ENCODE measurements at regions of chr1 and their contacts with region 1.

Region 1: DNA sequence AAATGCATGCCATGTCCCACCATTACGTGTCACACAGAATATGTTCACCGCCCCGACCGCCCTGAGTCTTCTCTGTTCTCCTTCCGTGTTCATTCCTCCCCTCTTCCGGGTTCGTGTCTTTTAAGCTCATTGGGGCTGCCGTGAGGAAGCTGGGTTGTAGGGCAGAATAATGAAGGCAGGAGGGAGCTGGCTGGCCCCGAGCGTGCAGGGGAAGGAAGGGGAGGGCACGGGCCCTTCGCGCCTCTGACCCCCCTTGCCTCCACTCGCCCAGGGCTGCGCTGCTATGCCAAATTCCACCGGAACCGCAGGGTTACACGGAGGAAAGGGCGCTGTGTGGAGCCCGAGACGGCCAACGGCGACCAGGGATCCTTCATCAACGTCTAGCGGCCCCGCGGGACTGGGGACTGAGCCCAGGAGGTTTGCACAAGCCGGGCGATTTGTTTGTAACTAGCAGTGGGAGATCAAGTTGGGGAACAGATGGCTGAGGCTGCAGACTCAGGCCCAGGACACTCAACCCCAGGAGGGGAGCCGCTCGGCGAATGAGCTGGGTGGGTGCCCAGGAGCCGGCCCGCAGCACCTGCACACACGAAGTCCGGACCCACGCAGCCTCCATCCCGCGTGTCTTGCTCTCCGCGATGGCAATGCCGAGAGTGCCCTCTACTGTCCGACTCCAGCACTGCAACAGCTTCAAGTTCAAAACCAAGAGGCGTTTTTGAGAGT is 16.5 kb upstream of the AGTRAP start:
- DNase-seq: peak; percentile 87
- H3K4me3 Mint-ChIP-seq: peak overlapping the region; percentile 56
- H3K27ac Mint-ChIP-seq: peak overlapping the region; percentile 85
- H3K4me1 Mint-ChIP-seq: peaks cover 19% of the 10 kb centered on the region
- H3K27me3 Mint-ChIP-seq: peaks cover 9% of the 10 kb centered on the region

Region 2: DNA sequence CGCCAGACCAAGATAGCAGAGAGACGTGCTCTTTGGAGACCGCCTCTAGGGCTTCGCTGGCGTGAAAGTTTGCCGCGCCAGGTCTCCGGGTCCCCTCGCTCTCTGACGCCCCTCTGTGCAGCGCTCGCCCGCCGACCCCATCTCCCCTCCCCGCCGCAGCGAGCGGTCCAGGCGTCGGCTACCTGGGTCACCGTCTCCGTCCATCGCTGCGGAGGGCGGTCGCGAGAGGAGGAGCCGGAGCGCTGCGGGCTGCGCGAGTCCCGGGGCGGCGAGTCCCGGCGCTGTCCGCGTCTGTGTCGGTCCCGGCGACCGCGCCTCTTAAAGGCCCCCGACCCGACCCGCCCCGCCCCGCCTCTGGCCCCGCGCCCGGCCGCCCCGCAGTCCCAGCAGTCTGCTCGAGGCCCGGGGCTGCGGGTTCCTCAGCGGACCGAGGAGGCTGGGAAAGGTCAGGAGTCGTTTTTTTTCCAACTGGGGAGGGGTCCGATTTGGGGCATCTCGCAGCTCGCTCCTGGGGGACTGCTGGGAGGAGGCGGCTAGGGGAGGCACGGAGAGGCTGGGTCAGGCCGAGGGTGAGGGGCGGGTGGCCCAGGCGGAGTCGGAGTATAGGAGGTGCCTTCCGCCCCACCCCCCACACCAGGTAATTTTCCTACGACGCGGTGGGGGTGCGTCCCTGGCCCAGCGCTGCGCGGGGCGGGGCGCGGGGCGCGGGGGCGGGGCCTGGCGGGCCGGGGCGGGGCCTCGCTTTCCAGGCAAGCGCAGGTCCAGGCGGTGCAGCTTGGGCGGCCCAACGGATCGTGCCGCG is 65.1 kb before region 1 on chr1 and contains the starts of genes FBXO2 and FBXO44:
- CTCF ChIA-PET with region 1: interaction called, 96 read pairs
- POLR2A ChIA-PET with region 1: interaction called, 28 read pairs
- DNase-seq: peak; percentile 60
- H3K4me3 Mint-ChIP-seq: peak within 1 kb of the TSS; percentile 71
- H3K27ac Mint-ChIP-seq: no peak within 1 kb of the TSS
- H3K4me1 Mint-ChIP-seq: peaks cover 29% of the 10 kb centered on the region
- H3K27me3 Mint-ChIP-seq: peaks cover 6% of the 10 kb centered on the region
- total RNA-seq, gene FBXO2: 1.4 to 1.8 TPM
- total RNA-seq, gene FBXO44: 30.4 to 32.4 TPM

Region 3: DNA sequence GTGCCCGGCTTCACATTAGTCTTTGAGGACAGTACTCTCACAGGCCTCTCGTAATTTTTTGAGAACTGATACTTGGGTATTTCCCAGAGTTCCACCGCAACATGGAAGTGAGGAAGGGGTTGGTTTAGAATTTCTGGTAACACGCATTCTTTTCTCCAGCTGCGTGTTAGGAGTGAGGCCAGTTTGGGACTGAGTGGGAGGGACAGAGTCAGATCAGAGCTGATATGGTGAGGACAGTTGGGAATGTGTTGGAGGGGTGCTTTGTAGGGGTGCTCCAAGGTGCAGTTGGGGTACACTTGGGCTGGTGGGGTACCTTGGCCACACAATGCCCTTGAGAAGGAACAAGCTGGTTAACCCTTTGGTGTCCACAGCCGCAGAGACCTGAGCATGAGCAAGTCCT is 48.7 kb before region 1 on chr1:
- CTCF ChIA-PET with region 1: interaction called, 65 read pairs
- POLR2A ChIA-PET with region 1: interaction called, 47 read pairs
- DNase-seq: no peak
- H3K4me3 Mint-ChIP-seq: no peak overlapping the region
- H3K27ac Mint-ChIP-seq: no peak overlapping the region
- H3K4me1 Mint-ChIP-seq: peaks cover 18% of the 10 kb centered on the region
- H3K27me3 Mint-ChIP-seq: no peaks in the 10 kb centered on the region

Region 4: DNA sequence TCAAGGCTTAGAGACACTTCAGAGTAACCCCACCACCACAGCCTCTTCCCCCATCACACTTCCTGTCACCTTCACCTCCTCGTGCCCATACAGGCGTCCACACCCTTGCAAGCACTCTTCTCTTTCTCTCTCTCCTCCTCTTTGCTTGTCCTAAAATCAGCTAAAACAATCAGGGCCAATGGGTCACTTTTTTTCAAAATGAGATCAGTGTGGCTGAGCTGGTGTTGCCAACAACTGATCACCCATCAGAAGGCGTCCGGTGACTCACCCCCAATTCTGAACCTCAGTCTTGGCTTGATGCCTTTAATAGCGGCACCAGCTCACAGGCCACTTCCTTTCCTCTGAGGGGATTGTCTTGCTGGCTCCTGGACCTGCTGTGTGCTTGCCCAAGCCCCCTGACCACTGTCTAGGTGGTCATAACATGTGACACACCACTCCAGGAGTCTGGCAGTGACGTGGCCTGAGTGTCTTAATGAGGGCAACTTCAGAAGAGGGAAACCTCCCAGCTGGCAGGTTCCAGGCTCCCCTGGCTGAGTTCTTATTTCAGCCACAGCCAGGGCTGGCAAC is 26.4 kb before region 1 on chr1:
- CTCF ChIA-PET with region 1: interaction called, 11 read pairs
- POLR2A ChIA-PET with region 1: interaction called, 4 read pairs
- DNase-seq: peak; percentile 72
- H3K4me3 Mint-ChIP-seq: peak overlapping the region; percentile 28
- H3K27ac Mint-ChIP-seq: peak overlapping the region; percentile 23
- H3K4me1 Mint-ChIP-seq: peaks cover 31% of the 10 kb centered on the region
- H3K27me3 Mint-ChIP-seq: peaks cover 49% of the 10 kb centered on the region

Region 5: DNA sequence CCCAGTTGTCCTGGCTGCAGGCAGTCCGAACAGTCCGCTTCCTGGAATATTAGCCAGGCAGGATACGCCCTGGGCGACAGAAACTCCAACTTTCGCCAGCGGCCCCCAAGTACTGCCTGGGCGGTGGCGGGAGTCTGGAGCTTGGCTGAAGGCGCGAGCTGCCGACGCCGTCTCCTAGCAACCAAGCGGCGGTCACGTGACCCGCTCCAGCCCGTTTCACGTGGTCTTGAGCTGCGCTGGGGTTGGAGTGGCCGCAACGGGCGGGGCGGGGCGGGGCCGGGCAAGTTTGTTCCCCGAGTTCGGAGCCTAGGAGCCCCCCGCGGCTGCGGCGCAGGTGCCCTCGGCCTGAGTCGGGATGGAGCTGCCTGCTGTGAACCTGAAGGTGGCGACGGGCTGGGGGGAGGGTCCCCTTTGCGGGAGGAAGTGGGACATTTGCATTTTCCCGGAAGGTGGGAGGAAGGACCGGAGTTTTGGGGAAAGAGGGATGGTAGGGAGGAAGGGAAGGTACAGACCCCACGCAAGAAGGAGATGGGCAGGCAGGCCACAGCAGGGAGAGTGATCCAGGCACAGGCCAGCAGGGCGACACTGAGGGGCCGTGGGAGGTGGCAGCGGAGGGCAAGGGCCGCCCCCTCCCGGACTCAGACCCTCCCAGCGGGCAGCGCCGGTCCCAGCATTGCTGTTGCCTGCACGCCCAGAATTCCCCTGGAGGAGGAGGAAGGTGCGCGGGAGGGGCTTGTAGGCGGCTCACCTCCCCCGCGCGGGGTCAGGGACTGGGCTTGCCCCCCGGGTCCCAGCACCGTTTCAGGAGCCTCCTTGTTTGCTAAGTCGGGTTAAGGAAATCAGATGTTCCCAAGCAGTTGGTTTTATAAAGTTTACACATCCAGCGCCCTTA is 16.6 kb after region 1 on chr1 and contains the start of gene AGTRAP:
- CTCF ChIA-PET with region 1: interaction called, 17 read pairs
- POLR2A ChIA-PET with region 1: interaction called, 20 read pairs
- DNase-seq: peak; percentile 92
- H3K4me3 Mint-ChIP-seq: peak within 1 kb of the TSS; percentile 98
- H3K27ac Mint-ChIP-seq: peak within 1 kb of the TSS; percentile 86
- H3K4me1 Mint-ChIP-seq: peaks cover 69% of the 10 kb centered on the region
- H3K27me3 Mint-ChIP-seq: no peaks in the 10 kb centered on the region
- total RNA-seq, gene AGTRAP: 52.7 to 57.3 TPM

Measured in activated CD4-positive, alpha-beta memory T cell treated with anti-CD3 and anti-CD28 coated beads, Interleukin-2, amount 10 ng/mL, durations not matched to agents 7 days and 5 days (primary cell).